GM12878 (cell line): ENCODE measurements at regions of chr4 and their contacts with region 1.

Region 1: GRCh38 chr4:56435306-56435926 is at the start of gene PPAT:
- DNase-seq: peak; percentile 94
- ATAC-seq: peak; percentile 81
- H3K4me3 ChIP-seq: peak within 1 kb of the TSS; percentile 90
- H3K27ac ChIP-seq: peak within 1 kb of the TSS; percentile 98
- H3K4me1 ChIP-seq: no peaks in the 10 kb centered on the region
- H3K27me3 ChIP-seq: no peaks in the 10 kb centered on the region
- CTCF ChIP-seq: peak in 2 of 3 experiments; percentile 7 to 15; a peak in 3 of 6 replicates
- EP300 ChIP-seq: no peak
- POLR2A ChIP-seq: peak; percentile 94
- RAD21 ChIP-seq: no peak
- polyA plus RNA-seq, gene PPAT: 24.9 to 32.6 TPM

Region 2: DNA sequence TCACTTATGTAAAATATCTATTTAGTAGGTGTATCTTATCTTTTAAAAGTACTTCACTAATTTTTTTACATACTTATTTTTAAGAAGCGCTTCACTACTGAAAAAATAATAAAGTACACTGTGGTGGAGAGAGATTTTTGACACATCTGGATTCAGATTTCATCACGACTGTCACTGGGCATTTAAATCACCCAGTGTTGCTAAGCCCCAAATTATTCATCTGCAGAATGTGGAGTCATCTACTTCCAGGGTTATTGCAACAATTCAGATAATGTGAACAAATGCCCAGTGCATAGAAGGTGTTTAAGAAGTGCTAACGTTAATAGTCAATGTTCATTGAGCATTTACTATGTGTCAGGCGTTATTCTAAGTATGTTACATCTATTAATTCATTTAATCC is 90.0 kb before region 1 on chr4:
- CTCF ChIA-PET with region 1: no interaction called
- POLR2A ChIA-PET with region 1: interaction called, 10 read pairs
- RAD21 ChIA-PET with region 1: no interaction called
- SMC1A ChIA-PET with region 1: no interaction called
- in situ Hi-C with region 1: no loop called
- intact Hi-C with region 1: no loop called
- DNase-seq: no peak
- ATAC-seq: no peak
- H3K4me3 ChIP-seq: no peak overlapping the region
- H3K27ac ChIP-seq: no peak overlapping the region
- H3K4me1 ChIP-seq: no peaks in the 10 kb centered on the region
- H3K27me3 ChIP-seq: no peaks in the 10 kb centered on the region
- CTCF ChIP-seq: no peak
- EP300 ChIP-seq: no peak
- POLR2A ChIP-seq: no peak
- RAD21 ChIP-seq: no peak

Region 3: DNA sequence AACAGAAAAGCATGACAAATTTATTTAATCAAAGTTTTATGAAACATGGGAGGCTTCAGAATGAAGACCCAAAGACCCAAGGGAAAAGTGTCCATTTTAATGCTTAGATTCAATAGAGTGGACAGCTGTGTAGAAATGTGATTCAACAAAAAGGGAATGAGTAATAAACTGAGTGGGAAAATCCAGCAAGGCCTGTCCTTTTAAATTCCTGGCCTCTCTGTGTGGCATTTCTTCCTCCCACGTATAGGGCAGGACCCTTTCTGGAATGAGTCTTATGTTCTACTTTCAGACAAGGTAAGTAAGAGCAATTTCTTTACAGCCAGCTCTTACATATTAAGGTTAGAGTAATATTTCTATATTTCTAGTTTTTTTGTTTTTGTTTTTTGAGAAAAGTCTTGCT is 62.6 kb before region 1 on chr4:
- CTCF ChIA-PET with region 1: no interaction called
- POLR2A ChIA-PET with region 1: no interaction called
- RAD21 ChIA-PET with region 1: no interaction called
- SMC1A ChIA-PET with region 1: no interaction called
- in situ Hi-C with region 1: no loop called
- intact Hi-C with region 1: no loop called
- DNase-seq: no peak
- ATAC-seq: no peak
- H3K4me3 ChIP-seq: no peak overlapping the region
- H3K27ac ChIP-seq: no peak overlapping the region
- H3K4me1 ChIP-seq: no peaks in the 10 kb centered on the region
- H3K27me3 ChIP-seq: no peaks in the 10 kb centered on the region
- CTCF ChIP-seq: no peak
- EP300 ChIP-seq: no peak
- POLR2A ChIP-seq: no peak
- RAD21 ChIP-seq: no peak

Region 4: DNA sequence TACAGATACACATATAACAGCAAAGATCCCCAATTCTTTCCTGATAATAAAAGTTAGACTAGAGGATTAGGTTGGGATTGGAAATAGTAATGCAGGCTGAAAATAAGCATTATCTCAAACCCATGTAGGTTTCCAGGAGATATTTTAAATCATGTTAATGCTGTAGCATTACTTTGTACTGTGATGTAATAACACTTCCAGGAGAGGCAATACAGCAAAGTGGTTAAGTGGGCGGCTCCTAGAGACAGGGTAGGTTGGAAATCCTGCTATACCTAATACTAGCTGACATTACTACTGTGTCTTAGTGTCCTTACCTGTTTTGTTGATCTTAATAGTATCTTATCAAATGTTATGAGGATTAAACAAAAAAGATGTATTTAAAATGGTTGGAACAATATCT is 10.3 kb after region 1 on chr4:
- CTCF ChIA-PET with region 1: interaction called, 4 read pairs
- POLR2A ChIA-PET with region 1: interaction called, 6 read pairs
- RAD21 ChIA-PET with region 1: interaction called, 6 read pairs
- SMC1A ChIA-PET with region 1: interaction called, 13 read pairs
- in situ Hi-C with region 1: no loop called
- intact Hi-C with region 1: no loop called
- DNase-seq: no peak
- ATAC-seq: peak; percentile 51
- H3K4me3 ChIP-seq: no peak overlapping the region
- H3K27ac ChIP-seq: no peak overlapping the region
- H3K4me1 ChIP-seq: no peaks in the 10 kb centered on the region; the same call in 1 of the 2 replicates
- H3K27me3 ChIP-seq: no peaks in the 10 kb centered on the region
- CTCF ChIP-seq: no peak
- EP300 ChIP-seq: no peak
- POLR2A ChIP-seq: no peak
- RAD21 ChIP-seq: no peak

Region 5: DNA sequence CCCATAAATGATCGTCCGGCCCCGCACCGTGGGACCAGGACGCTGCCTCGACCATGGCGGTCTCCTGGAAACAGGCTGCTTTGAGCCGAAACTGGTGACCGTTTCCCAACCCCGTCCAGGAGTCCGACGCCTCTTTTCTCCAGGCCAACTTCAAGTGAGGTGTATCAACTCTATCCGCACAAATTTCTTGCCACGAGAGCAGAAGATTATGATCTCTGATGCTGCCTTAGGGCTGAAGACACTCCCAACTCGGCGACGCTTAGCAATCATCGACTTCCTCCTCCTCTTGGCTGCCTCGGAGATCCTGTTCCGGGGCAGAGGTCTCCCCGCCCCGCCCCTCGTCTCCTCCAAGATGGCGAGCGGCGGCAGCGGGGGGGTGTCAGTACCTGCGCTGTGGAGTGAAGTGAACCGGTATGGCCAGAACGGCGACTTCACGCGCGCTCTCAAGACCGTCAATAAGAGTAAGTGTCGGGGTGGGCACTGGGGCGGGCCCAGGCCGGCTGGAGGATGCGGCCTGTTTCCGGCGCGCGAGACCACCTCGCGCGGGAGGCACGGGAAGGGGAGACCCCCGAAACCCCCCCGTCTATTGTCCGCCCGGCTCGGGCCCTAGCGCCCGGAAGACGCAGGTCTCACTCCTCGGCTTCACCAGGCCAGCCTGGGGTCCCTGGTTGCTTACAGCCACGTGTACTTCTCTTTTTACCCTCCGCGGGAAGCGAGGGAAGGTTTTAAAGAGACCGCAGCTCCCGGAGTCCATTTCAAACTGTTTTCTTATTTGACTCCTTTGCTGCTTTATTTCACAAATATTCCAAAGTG is 32.1 kb after region 1 on chr4 and contains the start of gene SRP72:
- CTCF ChIA-PET with region 1: interaction called, 5 read pairs
- POLR2A ChIA-PET with region 1: interaction called, 34 read pairs
- RAD21 ChIA-PET with region 1: interaction called, 22 read pairs
- SMC1A ChIA-PET with region 1: interaction called, 19 read pairs
- in situ Hi-C with region 1: no loop called
- intact Hi-C with region 1: loop called (anchors 2 kb)
- DNase-seq: peak; percentile 36
- ATAC-seq: peak; percentile 95
- H3K4me3 ChIP-seq: peak within 1 kb of the TSS; percentile 89
- H3K27ac ChIP-seq: peak within 1 kb of the TSS; percentile 52
- H3K4me1 ChIP-seq: peaks cover 7% of the 10 kb centered on the region; the same call in 1 of the 2 replicates
- H3K27me3 ChIP-seq: no peaks in the 10 kb centered on the region
- CTCF ChIP-seq: no peak
- EP300 ChIP-seq: no peak
- POLR2A ChIP-seq: peak; percentile 96
- RAD21 ChIP-seq: no peak
- polyA plus RNA-seq, gene SRP72: 158 to 186 TPM

Region 6: DNA sequence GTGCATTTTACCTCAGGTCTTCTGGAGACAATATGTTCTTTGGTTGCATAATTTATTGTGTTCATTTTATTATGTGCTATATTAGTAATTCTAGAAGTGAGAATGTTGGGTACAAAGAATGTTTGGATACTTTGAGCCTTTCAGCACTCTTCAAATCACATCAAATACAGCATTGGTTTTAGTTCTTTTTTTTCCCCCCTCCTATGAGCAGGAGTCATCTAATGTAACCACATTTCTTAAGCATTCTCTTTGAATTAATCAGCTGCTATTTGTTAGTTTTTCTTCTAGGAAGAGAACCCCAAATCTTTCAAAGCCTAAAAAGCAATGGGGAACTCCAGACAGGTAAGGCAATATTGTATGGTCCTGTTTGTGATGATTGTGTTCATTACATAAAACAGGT is 116.9 kb after region 1 on chr4:
- CTCF ChIA-PET with region 1: no interaction called
- POLR2A ChIA-PET with region 1: no interaction called
- RAD21 ChIA-PET with region 1: no interaction called
- SMC1A ChIA-PET with region 1: no interaction called
- in situ Hi-C with region 1: no loop called
- intact Hi-C with region 1: no loop called
- DNase-seq: no peak
- ATAC-seq: no peak
- H3K4me3 ChIP-seq: no peak overlapping the region
- H3K27ac ChIP-seq: no peak overlapping the region
- H3K4me1 ChIP-seq: no peaks in the 10 kb centered on the region
- H3K27me3 ChIP-seq: no peaks in the 10 kb centered on the region
- CTCF ChIP-seq: no peak
- EP300 ChIP-seq: no peak
- POLR2A ChIP-seq: no peak
- RAD21 ChIP-seq: no peak

Region 7: DNA sequence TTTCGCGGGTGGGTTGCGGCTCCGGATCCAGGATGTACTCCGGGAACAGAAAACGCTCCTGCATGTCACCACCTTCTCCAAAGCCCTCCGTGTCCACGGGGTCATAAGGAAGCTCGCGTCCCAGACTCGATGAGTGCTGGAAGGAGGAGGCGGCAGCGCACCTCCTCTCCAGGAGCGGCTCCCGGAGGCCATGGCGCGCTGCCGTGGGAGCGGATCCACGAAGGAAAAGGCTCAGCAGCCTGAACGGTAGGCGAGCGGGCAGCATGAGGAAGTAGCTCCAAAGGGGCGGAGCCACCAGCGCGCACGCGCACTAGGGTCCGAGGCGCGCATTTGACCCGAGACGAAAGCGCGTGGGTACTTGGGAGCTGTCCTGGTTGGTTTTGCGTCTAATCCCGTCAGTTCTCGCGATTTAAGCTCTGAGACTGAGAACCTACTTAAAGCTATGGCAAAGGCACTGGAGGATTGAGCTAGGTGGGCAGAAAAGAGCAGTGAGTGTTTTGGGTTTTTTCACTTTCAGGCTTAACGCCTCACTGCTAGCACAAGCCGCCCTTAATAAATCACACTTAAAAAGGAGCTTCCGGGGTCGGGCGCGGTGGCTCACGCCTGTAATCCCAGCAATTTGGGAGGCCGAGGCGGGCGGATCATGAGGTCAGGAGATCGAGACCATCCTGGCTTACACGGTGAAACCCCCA is 542.1 kb after region 1 on chr4 and contains the start of gene NOA1:
- CTCF ChIA-PET with region 1: no interaction called
- POLR2A ChIA-PET with region 1: interaction called, 22 read pairs
- RAD21 ChIA-PET with region 1: interaction called, 13 read pairs
- SMC1A ChIA-PET with region 1: interaction called, 4 read pairs
- in situ Hi-C with region 1: no loop called
- intact Hi-C with region 1: loop called (anchors 2 kb)
- DNase-seq: peak; percentile 99
- ATAC-seq: peak; percentile 87
- H3K4me3 ChIP-seq: peak within 1 kb of the TSS; percentile 92
- H3K27ac ChIP-seq: peak within 1 kb of the TSS; percentile 92
- H3K4me1 ChIP-seq: peaks cover 4% of the 10 kb centered on the region
- H3K27me3 ChIP-seq: no peaks in the 10 kb centered on the region
- CTCF ChIP-seq: no peak
- EP300 ChIP-seq: 0 out of 4 replicates have a peak, but pooled peaks of 1 of the 2 experiments have one; percentile 15
- POLR2A ChIP-seq: peak; percentile 88
- RAD21 ChIP-seq: no peak
- polyA plus RNA-seq, gene NOA1: 3.2 to 8.3 TPM